CD8-positive, alpha-beta T cell (primary cell): ENCODE measurements at regions of chrX and their contacts with region 1.

Region 1: GRCh38 chrX:4710618-4711433 is 997.4 kb upstream of the PRKX start:
- DNase-seq: no peak
- ATAC-seq: no peak
- H3K4me3 ChIP-seq: no peak overlapping the region
- H3K4me3 Mint-ChIP-seq: no peak overlapping the region
- H3K27ac ChIP-seq: no peak overlapping the region
- H3K27ac Mint-ChIP-seq: no peak overlapping the region
- H3K4me1 ChIP-seq: no peaks in the 10 kb centered on the region
- H3K4me1 Mint-ChIP-seq: no peaks in the 10 kb centered on the region
- H3K27me3 ChIP-seq: no peaks in the 10 kb centered on the region
- H3K27me3 Mint-ChIP-seq: no peaks in the 10 kb centered on the region
- CTCF ChIP-seq: no peak

Region 2: DNA sequence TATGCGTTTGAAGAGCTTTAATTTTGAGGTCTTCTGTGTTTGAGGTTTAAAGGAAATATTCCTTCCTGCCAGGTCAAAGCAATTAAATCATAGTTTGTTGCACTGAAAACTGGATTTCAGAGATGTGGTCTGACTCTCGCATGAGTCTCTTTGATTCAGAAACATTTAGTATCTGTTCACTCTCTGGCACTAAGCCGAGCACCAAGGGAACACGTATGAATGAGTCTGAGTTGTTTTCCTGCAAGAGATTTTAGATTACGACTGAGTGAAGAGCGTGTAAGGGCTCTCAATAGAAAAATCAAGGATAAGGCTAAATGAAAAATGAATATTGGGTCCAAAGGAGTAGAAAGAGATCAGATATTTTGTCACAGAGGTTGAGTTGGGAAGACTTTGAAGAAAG is 121.9 kb before region 1 on chrX:
- CTCF ChIA-PET with region 1: no interaction called
- POLR2A ChIA-PET with region 1: no interaction called
- intact Hi-C with region 1: no loop called
- DNase-seq: no peak
- ATAC-seq: no peak
- H3K4me3 ChIP-seq: no peak overlapping the region
- H3K4me3 Mint-ChIP-seq: no peak overlapping the region
- H3K27ac ChIP-seq: no peak overlapping the region
- H3K27ac Mint-ChIP-seq: no peak overlapping the region
- H3K4me1 ChIP-seq: no peaks in the 10 kb centered on the region
- H3K4me1 Mint-ChIP-seq: no peaks in the 10 kb centered on the region
- H3K27me3 ChIP-seq: no peaks in the 10 kb centered on the region
- H3K27me3 Mint-ChIP-seq: no peaks in the 10 kb centered on the region
- CTCF ChIP-seq: no peak

Region 3: DNA sequence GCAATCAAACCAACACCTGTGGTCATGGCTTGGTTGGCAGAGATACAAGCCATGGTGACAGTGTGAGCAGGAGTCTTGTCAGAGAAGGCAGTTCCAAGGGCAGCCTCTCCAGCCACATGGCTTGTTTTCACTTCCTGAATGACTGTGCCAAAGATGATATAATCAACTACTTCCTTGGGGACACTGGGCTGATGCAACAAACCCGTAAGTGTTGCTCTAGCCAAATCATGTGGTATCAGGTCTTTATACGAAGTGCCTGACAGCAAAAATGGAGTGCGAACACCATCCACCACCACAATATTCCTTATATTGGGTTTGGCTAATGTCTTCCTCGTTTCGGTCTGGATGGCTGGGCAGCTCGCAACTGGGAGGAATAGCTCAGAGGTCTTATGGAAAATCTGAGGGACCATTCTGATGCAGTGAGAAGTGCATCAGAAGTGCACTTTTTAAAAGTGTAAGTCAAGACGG is 595.9 kb after region 1 on chrX:
- CTCF ChIA-PET with region 1: no interaction called
- POLR2A ChIA-PET with region 1: no interaction called
- intact Hi-C with region 1: loop called in 1 of 2 experiments (anchors 10 kb)
- DNase-seq: no peak
- ATAC-seq: no peak
- H3K4me3 ChIP-seq: no peak overlapping the region
- H3K4me3 Mint-ChIP-seq: no peak overlapping the region
- H3K27ac ChIP-seq: no peak overlapping the region
- H3K27ac Mint-ChIP-seq: no peak overlapping the region
- H3K4me1 ChIP-seq: no peaks in the 10 kb centered on the region
- H3K4me1 Mint-ChIP-seq: no peaks in the 10 kb centered on the region
- H3K27me3 ChIP-seq: no peaks in the 10 kb centered on the region
- H3K27me3 Mint-ChIP-seq: no peaks in the 10 kb centered on the region
- CTCF ChIP-seq: no peak